AG04450 (cell line): ENCODE measurements at regions of chr2 and their contacts with region 1.

Region 1: DNA sequence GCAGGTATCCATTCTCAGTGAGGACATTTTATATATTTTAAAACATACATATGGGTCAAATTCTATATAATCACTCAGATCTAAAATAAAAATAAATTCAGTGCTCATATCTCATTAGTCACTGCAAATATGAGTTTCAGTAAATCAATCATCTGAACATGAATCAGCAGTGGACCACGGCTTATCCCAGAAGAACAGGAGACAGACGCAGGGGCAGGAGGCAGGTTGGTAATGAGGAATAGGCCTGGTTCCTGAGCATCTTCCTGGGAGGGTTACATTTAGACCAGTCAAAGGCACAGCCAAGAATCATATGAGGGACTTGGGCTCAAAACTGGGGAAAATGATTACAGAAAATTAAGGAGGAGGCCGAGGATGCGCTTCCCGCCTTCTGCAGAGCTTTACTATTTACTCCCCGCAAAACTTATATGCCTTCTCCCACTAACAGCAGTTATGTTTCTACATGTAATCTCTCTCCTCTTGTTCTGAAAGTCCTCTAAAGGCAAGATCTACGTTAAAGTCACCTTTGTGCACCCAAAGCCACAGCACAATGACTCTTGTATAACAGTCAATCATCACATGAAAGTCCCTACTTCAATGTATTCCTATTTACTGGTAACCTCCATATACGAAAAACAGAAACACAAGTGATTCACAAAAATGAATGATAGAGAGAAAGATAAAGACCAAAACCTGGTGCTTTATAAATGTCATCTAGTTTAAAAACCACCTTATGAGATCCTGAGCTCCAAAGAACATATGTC is 35.1 kb downstream of the SH3YL1 start:
- DNase-seq: no peak
- H3K4me3 ChIP-seq: no peak overlapping the region
- H3K27ac ChIP-seq: no peak overlapping the region
- H3K27me3 ChIP-seq: no peaks in the 10 kb centered on the region
- CTCF ChIP-seq: no peak

Region 2: GRCh38 chr2:175880-176800 is 52.6 kb before region 1 on chr2:
- CTCF ChIA-PET with region 1: no interaction called
- POLR2A ChIA-PET with region 1: no interaction called
- DNase-seq: no peak
- H3K4me3 ChIP-seq: no peak overlapping the region
- H3K27ac ChIP-seq: no peak overlapping the region
- H3K27me3 ChIP-seq: no peaks in the 10 kb centered on the region
- CTCF ChIP-seq: no peak

Region 3: DNA sequence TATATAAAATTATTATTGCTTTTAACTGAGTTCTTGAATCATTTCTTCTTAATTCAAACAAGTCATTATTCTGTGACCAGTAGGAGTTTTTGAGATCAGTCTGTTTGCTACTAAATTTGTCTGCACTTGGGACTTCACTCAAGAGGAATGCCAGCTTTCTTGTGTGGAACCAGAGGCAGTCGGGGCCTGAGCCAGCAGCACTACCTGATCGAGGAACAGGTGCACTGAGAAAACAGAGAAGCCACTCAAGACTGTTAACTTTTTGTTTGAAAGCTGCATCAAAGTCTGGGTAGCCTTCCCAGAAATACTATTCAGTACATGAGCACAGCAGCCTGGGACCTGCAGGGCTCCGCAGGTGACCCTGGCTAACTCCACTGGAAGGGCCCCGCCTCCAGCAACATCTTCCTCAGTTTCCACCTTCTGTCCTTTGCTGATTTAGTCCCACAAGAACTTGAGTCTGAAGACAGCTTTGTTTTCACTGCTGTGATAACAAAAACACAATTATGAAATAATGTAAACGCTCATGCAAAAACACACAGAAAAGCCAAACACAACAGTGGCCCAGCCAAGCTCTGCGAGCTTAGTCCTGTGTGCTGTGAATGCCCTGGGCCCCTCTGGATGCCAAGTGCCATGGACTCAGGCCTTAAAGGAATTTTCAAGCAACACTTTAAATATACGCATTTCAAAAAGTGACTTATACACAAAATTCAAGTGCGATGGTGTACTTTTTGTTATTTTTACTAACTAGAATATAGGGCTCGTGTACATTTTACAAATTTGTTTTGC is 26.9 kb before region 1 on chr2:
- CTCF ChIA-PET with region 1: no interaction called
- POLR2A ChIA-PET with region 1: no interaction called
- DNase-seq: no peak
- H3K4me3 ChIP-seq: no peak overlapping the region
- H3K27ac ChIP-seq: no peak overlapping the region
- H3K27me3 ChIP-seq: no peaks in the 10 kb centered on the region
- CTCF ChIP-seq: no peak

Region 4: DNA sequence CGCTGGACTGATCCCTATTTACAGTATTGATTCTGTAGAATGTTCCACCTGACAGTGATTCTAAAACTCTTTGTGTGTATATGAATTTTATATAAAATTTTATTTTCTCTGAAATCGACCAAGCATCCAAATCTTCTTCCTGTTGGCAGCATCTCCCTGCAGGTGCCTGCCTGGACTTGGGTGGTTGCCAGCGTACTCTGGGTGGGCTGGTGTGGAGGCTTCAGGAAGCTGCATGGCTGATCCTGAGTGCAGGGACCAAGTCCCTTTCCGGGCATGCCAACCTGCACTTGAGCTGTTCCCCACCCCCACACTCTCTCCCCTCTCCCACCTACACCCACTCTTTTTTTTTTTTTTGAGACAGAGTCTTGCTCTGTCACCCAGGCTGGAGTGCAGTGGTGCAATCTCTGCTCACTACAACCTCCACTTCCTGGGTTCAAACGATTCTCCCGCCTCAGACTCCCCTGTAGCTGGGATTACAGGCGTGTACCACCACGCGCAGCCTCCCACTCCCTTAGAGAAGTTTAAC is 112.4 kb after region 1 on chr2:
- CTCF ChIA-PET with region 1: interaction called, 10 read pairs
- POLR2A ChIA-PET with region 1: no interaction called
- DNase-seq: no peak
- H3K4me3 ChIP-seq: no peak overlapping the region
- H3K27ac ChIP-seq: no peak overlapping the region
- H3K27me3 ChIP-seq: no peaks in the 10 kb centered on the region
- CTCF ChIP-seq: no peak

Region 5: DNA sequence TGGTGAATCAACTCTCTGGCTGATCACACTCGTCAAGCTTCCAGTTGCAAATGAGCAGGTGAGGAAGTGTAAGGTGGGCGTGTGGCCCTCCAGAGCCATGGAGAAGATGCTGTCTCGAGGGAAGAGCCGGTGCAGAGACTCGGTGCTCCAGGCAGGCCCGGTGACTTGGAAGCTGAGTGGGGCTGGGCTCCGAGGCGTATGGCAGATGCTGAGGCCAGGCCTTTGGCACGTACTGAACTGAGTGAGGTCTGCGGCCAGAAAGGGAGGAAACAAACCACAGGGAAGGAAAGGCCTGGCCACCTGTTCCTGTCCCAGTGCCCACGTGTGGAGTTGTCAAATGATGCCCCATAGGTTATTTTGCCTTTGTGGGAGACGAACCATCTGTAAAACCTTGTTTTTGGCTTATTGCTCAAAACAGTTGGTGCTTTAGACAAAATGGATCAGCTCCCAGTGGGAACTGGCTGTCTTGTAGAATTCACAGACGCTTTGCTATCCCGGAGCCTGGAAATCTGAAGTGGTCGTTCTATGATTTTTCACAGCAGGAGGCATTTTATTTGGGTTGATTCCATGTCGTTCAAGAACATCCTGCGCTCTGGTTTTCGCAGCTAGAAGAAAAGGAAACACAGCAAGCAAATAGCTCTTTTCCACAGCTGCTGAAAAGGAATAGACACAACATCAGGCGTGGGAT is 566.0 kb after region 1 on chr2:
- CTCF ChIA-PET with region 1: no interaction called
- POLR2A ChIA-PET with region 1: no interaction called
- DNase-seq: no peak
- H3K4me3 ChIP-seq: no peak overlapping the region
- H3K27ac ChIP-seq: no peak overlapping the region
- H3K27me3 ChIP-seq: no peaks in the 10 kb centered on the region
- CTCF ChIP-seq: no peak